Aorta (tissue), 5 donors: ENCODE measurements at regions of chr9 and their contacts with region 1.

Region 1: GRCh38 chr9:89549031-89549644 is 51.2 kb upstream of the SEMA4D start:
- DNase-seq: peak; percentile 89 to 91
- ATAC-seq: peak; percentile 92
- H3K4me3 ChIP-seq: no peak overlapping the region
- H3K27ac ChIP-seq: no peak overlapping the region
- H3K4me1 ChIP-seq: no peaks in the 10 kb centered on the region
- H3K27me3 ChIP-seq: no peaks in the 10 kb centered on the region

Region 2: GRCh38 chr9:89323390-89323789 is 225.7 kb before region 1 on chr9:
- intact Hi-C with region 1: loop called in 1 of 2 experiments (anchors 5 kb)
- DNase-seq: no peak
- ATAC-seq: no peak
- H3K4me3 ChIP-seq: no peak overlapping the region
- H3K27ac ChIP-seq: no peak overlapping the region
- H3K4me1 ChIP-seq: peaks cover 0 to 6% of the 10 kb centered on the region in 2 donors
- H3K27me3 ChIP-seq: no peaks in the 10 kb centered on the region

Region 3: GRCh38 chr9:89340332-89340731 is 208.8 kb before region 1 on chr9:
- intact Hi-C with region 1: loop called in 1 of 2 experiments (anchors 10 kb)
- DNase-seq: no peak
- ATAC-seq: no peak
- H3K4me3 ChIP-seq: no peak overlapping the region
- H3K27ac ChIP-seq: no peak overlapping the region
- H3K4me1 ChIP-seq: no peaks in the 10 kb centered on the region
- H3K27me3 ChIP-seq: no peaks in the 10 kb centered on the region

Region 4: GRCh38 chr9:89358985-89359384 is 190.2 kb before region 1 on chr9:
- intact Hi-C with region 1: loop called in 1 of 2 experiments (anchors 10 kb)
- DNase-seq: peak in 1 of 2 donors; percentile 57
- ATAC-seq: no peak
- H3K4me3 ChIP-seq: no peak overlapping the region
- H3K27ac ChIP-seq: no peak overlapping the region
- H3K4me1 ChIP-seq: no peaks in the 10 kb centered on the region
- H3K27me3 ChIP-seq: no peaks in the 10 kb centered on the region

Region 5: DNA sequence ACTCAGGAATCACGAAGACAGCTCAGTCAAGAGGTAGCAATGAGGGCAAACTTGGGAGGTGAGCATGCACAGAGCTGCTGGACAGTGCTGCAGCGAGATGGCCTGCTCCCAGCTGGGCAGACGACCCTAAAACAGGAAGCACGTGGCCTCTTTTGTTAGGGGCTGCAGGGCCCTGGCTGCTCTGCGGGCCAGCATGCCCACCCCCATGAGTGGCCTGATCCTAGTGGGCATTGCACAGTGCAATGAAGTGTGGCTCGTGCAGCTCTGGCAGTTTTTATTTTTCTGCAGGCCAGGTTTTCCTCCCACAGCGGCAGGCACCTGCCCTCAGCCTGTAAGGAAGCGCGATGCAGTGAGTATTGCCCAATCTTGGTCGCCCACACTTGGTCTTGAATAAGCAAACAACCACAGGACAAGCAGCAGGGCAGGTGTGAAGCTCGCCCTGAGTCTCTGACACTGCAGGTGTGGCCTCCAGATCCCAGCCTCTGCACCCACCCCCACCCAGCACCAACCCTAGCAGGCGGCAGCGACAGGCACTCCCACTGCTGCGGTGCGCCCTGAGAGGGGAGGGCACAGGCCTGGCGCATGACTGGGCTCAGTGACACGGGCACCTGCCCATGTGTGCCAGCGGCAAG is 112.0 kb before region 1 on chr9:
- intact Hi-C with region 1: no loop called
- DNase-seq: no peak
- ATAC-seq: no peak
- H3K4me3 ChIP-seq: no peak overlapping the region
- H3K27ac ChIP-seq: no peak overlapping the region
- H3K4me1 ChIP-seq: no peaks in the 10 kb centered on the region
- H3K27me3 ChIP-seq: no peaks in the 10 kb centered on the region

Region 6: DNA sequence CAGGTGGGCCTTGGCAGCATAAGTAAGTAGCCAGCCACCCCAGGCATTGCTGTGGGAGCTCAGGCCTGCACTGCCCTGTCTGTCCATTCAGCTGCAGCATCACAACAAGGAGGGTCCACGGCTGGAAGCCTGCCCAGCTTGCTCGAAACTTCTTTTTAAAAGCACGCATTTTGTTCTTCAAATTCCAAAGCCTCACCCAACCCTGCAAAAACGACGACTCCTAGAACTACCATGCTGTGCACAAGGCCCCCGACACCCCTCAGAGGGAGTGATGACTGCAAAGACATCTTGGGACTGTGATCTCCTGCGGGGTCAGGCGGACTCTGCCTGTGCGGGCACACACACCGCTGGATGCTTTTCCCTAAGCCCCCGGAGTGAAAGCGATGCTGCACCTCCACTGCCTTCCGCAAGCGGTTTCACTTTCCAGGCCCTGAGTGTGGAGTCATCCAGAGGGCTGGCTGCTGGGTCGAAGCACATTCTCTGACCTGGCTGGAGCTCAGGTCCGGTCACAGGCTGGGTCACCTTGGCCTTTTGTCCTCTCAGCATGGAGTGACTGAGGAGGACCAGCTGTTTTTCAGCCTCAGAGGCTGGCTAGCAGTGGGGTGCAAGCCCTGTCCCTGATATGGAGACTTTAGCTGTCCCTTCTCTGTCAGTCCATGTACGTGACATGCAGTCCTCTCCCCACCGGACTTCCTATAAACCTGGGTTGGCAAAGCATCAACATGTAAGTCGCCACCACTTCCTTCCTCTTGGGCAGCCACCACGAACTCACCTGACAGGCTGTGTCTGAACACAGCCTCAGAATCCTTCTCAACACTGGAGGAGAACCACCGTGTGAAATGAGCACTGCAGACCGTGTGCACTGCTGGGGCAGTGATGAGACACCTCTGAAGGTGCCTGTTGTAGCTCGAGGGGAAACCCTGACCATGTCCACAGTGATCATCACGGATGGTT is 106.8 kb after region 1 on chr9:
- intact Hi-C with region 1: no loop called
- DNase-seq: no peak
- ATAC-seq: peak; percentile 34
- H3K4me3 ChIP-seq: no peak overlapping the region
- H3K27ac ChIP-seq: no peak overlapping the region
- H3K4me1 ChIP-seq: no peaks in the 10 kb centered on the region
- H3K27me3 ChIP-seq: no peaks in the 10 kb centered on the region